B cell (primary cell): ENCODE measurements at regions of chr2 and their contacts with region 1.

Region 1: DNA sequence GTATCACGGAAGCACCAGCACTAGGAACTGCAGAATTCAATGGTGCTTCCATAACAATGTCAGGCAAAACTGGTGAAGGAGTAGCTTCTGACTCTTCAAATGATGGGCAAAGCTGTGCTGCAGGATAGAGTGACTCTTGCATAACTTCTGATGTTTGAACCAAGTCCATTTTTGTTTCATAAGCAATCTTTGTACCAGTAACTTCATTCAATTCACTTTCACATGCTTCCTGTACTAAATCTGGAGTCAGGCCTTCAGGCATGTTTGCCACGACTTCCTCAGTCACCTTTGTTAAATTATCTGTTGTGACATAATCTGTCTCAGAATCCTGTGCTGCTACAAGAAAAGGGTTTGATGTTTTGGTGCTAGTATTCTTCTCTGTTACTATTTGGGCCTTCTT is 24.0 kb downstream of the RTN4 start:
- DNase-seq: no peak
- ATAC-seq: no peak
- H3K4me3 ChIP-seq: no peak overlapping the region
- H3K4me3 Mint-ChIP-seq: peak overlapping the region; percentile 12
- H3K27ac ChIP-seq: no peak overlapping the region
- H3K27ac Mint-ChIP-seq: no peak overlapping the region
- H3K4me1 ChIP-seq: peaks cover 26 to 41% of the 10 kb centered on the region in 2 donors
- H3K4me1 Mint-ChIP-seq: peaks cover 8% of the 10 kb centered on the region
- H3K27me3 ChIP-seq: no peaks in the 10 kb centered on the region
- H3K27me3 Mint-ChIP-seq: no peaks in the 10 kb centered on the region
- CTCF ChIP-seq: no peak

Region 2: GRCh38 chr2:55014962-55015939 is 11.0 kb before region 1 on chr2:
- CTCF ChIA-PET with region 1: interaction called, 10 read pairs
- POLR2A ChIA-PET with region 1: no interaction called
- intact Hi-C with region 1: no loop called
- DNase-seq: peak; percentile 63
- ATAC-seq: peak; percentile 37
- H3K4me3 ChIP-seq: no peak overlapping the region
- H3K4me3 Mint-ChIP-seq: no peak overlapping the region
- H3K27ac ChIP-seq: no peak overlapping the region
- H3K27ac Mint-ChIP-seq: peak overlapping the region; percentile 22
- H3K4me1 ChIP-seq: peaks cover 21 to 41% of the 10 kb centered on the region in 2 donors
- H3K4me1 Mint-ChIP-seq: peaks cover 57% of the 10 kb centered on the region
- H3K27me3 ChIP-seq: no peaks in the 10 kb centered on the region
- H3K27me3 Mint-ChIP-seq: no peaks in the 10 kb centered on the region
- CTCF ChIP-seq: peak; percentile 64

Region 3: GRCh38 chr2:55038428-55038827 is 12.2 kb after region 1 on chr2:
- CTCF ChIA-PET with region 1: interaction called, 4 read pairs
- POLR2A ChIA-PET with region 1: no interaction called
- intact Hi-C with region 1: loop called (anchors 2 kb)
- DNase-seq: no peak
- ATAC-seq: no peak
- H3K4me3 ChIP-seq: no peak overlapping the region
- H3K4me3 Mint-ChIP-seq: no peak overlapping the region
- H3K27ac ChIP-seq: no peak overlapping the region
- H3K27ac Mint-ChIP-seq: no peak overlapping the region
- H3K4me1 ChIP-seq: peaks cover under 1 to 7% of the 10 kb centered on the region in 2 donors
- H3K4me1 Mint-ChIP-seq: peaks cover 38% of the 10 kb centered on the region
- H3K27me3 ChIP-seq: no peaks in the 10 kb centered on the region
- H3K27me3 Mint-ChIP-seq: no peaks in the 10 kb centered on the region
- CTCF ChIP-seq: no peak